WTC11 (cell line): ENCODE measurements at regions of chr1 and their contacts with region 1.

Region 1: GRCh38 chr1:224922404-224923164 is 6.9 kb upstream of the DNAH14 start:
- DNase-seq: no peak
- ATAC-seq: peak; percentile 98
- H3K4me3 Mint-ChIP-seq: no peak overlapping the region
- H3K27ac Mint-ChIP-seq: no peak overlapping the region
- H3K4me1 Mint-ChIP-seq: no peaks in the 10 kb centered on the region
- H3K27me3 Mint-ChIP-seq: peaks cover 1% of the 10 kb centered on the region
- CTCF ChIP-seq: peak; percentile 42

Region 2: DNA sequence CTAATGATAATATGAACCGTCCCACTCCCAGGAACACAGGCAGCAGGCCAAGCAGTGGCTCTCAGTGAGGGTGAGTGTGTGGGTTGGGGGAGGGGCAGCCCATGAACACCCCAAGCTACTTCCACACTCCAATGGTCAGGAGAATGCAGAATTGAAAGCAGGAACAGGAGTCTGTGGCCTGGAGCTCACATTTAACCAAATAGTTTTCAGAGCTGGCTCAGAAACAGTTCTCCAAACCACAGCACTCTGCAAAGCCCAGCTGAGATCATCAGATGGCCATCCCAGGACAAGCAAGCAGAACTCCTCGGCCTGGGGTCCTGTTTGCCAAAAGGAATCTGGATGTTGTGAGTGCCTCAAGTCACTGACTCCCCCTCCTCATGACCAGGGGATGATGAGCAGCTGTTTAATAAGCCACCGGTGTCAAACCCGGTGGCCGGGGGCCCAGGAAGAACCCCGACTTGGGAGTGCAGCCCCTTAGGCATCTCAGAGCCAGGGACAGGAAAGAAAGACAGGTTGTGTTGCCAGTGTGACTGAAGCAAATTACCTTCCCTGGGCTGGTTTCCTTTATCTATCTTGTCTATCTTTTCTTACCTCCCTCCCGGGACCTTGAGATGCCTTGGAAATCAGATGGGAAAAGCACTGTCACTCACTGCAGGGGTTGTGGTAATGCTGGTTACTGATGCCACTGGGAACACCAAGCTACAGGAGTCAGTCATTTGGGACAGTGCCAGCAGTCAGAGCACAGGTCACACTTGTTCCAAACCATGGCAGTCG is 719.2 kb before region 1 on chr1:
- CTCF ChIA-PET with region 1: no interaction called
- POLR2A ChIA-PET with region 1: no interaction called
- DNase-seq: peak; percentile 35
- ATAC-seq: peak; percentile 79
- H3K4me3 Mint-ChIP-seq: no peak overlapping the region
- H3K27ac Mint-ChIP-seq: 0 out of 2 replicates have a peak overlapping the region, but pooled peaks have one; percentile 45
- H3K4me1 Mint-ChIP-seq: peaks cover 15% of the 10 kb centered on the region
- H3K27me3 Mint-ChIP-seq: no peaks in the 10 kb centered on the region
- CTCF ChIP-seq: no peak

Region 3: DNA sequence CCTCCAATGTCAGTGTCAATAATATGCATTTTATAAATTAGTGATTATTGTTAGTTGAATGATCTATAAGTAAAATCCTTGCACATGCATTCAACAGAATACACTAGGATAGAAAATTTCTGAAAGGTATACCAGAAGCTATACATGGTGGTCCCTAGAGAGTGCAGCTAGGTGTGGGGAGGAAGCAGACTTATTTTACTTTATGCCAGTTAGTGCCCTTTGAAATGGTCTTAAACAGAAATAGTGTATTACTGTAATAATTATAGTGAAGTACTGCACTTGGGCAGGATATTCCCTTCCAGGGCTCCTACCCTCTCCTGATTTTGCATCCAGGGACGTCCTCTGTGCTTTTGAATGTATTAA is 464.8 kb before region 1 on chr1:
- CTCF ChIA-PET with region 1: interaction called, 16 read pairs
- POLR2A ChIA-PET with region 1: no interaction called
- DNase-seq: no peak
- ATAC-seq: no peak
- H3K4me3 Mint-ChIP-seq: no peak overlapping the region
- H3K27ac Mint-ChIP-seq: no peak overlapping the region
- H3K4me1 Mint-ChIP-seq: peaks cover 17% of the 10 kb centered on the region
- H3K27me3 Mint-ChIP-seq: no peaks in the 10 kb centered on the region
- CTCF ChIP-seq: no peak

Region 4: DNA sequence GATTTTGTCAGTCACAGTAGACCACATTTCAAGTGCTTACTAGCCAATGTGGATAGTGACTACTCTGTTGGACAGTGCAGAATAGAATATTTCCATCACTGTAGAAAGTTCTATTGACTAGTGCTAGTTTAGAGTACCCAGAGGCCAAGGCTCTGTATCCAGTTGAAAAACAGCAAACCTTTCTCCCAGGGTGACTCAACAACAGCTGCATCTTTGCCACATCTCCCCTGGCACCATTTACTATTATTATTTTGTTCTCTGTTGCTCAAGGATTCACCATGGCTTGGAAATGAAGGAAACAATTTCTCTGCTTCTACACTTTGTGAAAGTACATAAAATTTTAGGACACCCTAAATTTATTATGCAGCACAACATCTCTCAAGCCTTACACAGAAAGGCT is 402.7 kb before region 1 on chr1:
- CTCF ChIA-PET with region 1: interaction called, 76 read pairs
- POLR2A ChIA-PET with region 1: no interaction called
- DNase-seq: no peak
- ATAC-seq: no peak
- H3K4me3 Mint-ChIP-seq: no peak overlapping the region
- H3K27ac Mint-ChIP-seq: no peak overlapping the region
- H3K4me1 Mint-ChIP-seq: no peaks in the 10 kb centered on the region
- H3K27me3 Mint-ChIP-seq: no peaks in the 10 kb centered on the region
- CTCF ChIP-seq: no peak

Region 5: DNA sequence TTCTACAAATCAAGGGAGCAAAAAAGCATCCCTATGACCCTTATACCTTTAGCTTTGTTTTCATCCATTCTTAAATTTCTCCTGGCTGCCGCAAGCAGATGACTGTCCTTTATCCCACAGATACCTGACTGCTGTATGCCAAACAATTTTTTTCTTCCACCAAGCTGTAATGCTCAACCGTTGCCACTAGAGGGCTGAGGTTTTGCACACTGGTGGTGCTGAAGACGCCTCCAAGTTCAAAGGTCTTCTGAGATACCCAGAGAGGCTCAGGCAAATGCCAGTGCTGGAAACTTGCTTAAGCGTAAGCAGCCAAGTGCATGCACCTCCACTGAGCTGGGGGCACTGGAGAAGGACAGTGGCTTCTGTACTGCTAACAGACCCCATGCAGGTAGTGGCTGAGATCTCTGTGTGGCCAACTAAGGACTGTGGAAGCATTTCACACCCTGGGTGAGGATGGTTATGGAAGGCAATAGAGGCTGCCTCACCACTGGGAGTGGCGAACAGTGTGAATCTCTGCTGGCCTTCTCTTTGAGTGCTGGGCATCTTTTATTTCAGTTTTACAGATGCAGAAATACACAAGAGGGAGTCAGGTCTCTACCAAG is 277.9 kb before region 1 on chr1:
- CTCF ChIA-PET with region 1: interaction called, 22 read pairs
- POLR2A ChIA-PET with region 1: no interaction called
- DNase-seq: peak; percentile 73
- ATAC-seq: peak; percentile 72
- H3K4me3 Mint-ChIP-seq: no peak overlapping the region
- H3K27ac Mint-ChIP-seq: no peak overlapping the region
- H3K4me1 Mint-ChIP-seq: peaks cover 24% of the 10 kb centered on the region
- H3K27me3 Mint-ChIP-seq: no peaks in the 10 kb centered on the region
- CTCF ChIP-seq: peak; percentile 93

Region 6: DNA sequence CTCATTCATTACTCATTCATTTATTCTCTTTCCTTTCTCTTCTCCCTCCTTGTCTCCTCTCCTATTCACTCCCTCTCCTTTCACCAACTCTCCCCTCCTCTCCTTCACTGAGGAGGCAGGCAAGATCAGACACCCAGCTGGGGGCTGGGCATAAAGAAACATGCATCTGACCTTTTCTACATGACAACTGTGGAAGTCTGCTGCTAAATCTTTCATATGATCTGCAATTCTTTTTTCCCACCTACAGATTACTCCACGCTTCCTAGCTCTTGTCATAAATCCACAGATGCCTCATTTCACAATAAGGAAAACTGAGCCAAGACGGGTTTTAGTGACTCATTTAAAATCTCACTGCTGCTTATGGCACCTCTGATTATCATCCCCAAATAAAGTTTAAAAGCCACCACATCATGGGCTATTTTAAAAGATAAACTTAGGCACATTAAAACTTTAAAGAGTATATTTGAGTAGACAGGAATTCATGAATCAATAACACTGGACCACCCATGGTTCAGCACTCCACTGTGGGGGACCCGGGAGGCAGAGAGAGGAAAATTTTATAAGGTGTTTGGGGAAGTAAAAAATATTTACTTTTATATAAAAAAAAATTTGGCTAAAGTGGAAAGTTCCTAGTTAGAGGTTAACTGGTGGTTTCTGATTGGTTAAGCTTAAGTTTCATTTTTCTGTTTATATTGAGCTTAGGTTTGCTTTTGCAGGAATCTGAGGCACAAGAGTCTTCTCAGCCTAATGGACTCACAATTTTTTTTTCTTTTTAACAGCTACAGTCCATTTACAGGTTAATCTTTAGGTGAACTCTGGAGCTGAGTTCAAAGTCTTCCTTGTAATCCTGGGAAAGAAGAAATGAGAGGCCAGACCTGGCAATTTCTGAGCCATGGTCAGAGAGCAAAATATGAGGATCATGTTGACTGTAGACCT is 48.9 kb before region 1 on chr1:
- CTCF ChIA-PET with region 1: interaction called, 11 read pairs
- POLR2A ChIA-PET with region 1: no interaction called
- DNase-seq: no peak
- ATAC-seq: peak; percentile 70
- H3K4me3 Mint-ChIP-seq: no peak overlapping the region
- H3K27ac Mint-ChIP-seq: no peak overlapping the region
- H3K4me1 Mint-ChIP-seq: peaks cover 20% of the 10 kb centered on the region
- H3K27me3 Mint-ChIP-seq: no peaks in the 10 kb centered on the region; the same call in 1 of the 2 replicates
- CTCF ChIP-seq: no peak

Region 7: GRCh38 chr1:225280563-225280962 is 358.0 kb after region 1 on chr1:
- CTCF ChIA-PET with region 1: no interaction called
- POLR2A ChIA-PET with region 1: no interaction called
- DNase-seq: no peak
- ATAC-seq: no peak
- H3K4me3 Mint-ChIP-seq: no peak overlapping the region
- H3K27ac Mint-ChIP-seq: no peak overlapping the region
- H3K4me1 Mint-ChIP-seq: no peaks in the 10 kb centered on the region
- H3K27me3 Mint-ChIP-seq: peaks cover 4% of the 10 kb centered on the region; the same call in 1 of the 2 replicates
- CTCF ChIP-seq: no peak